WTC11 (cell line): ENCODE measurements at regions of chr13 and their contacts with region 1.

Region 1: GRCh38 chr13:39037880-39038568 is at the starts of genes NHLRC3 and PROSER1:
- DNase-seq: peak; percentile 88
- ATAC-seq: peak; percentile 86
- H3K4me3 Mint-ChIP-seq: peak within 1 kb of the TSS; percentile 92
- H3K27ac Mint-ChIP-seq: peak within 1 kb of the TSS; percentile 81
- H3K4me1 Mint-ChIP-seq: peaks cover 34% of the 10 kb centered on the region
- H3K27me3 Mint-ChIP-seq: no peaks in the 10 kb centered on the region
- CTCF ChIP-seq: no peak
- total RNA-seq, gene NHLRC3: 17.2 to 19.9 TPM (median 18.8 TPM) in 3 replicates
- total RNA-seq, gene PROSER1: 73.6 to 94.6 TPM (median 74.3 TPM) in 3 replicates

Region 2: GRCh38 chr13:39012608-39013007 is 25.4 kb before region 1 on chr13:
- CTCF ChIA-PET with region 1: interaction called, 10 read pairs
- POLR2A ChIA-PET with region 1: no interaction called
- DNase-seq: peak; percentile 71
- ATAC-seq: peak; percentile 99
- H3K4me3 Mint-ChIP-seq: no peak overlapping the region
- H3K27ac Mint-ChIP-seq: peak overlapping the region; percentile 9; the same call in 1 of the 2 replicates
- H3K4me1 Mint-ChIP-seq: peaks cover 5% of the 10 kb centered on the region
- H3K27me3 Mint-ChIP-seq: no peaks in the 10 kb centered on the region
- CTCF ChIP-seq: no peak; the same call in 1 of the 2 replicates

Region 3: GRCh38 chr13:39023790-39024189 is 14.2 kb before region 1 on chr13:
- CTCF ChIA-PET with region 1: interaction called, 3 read pairs
- POLR2A ChIA-PET with region 1: interaction called, 10 read pairs
- DNase-seq: no peak
- ATAC-seq: peak; percentile 38
- H3K4me3 Mint-ChIP-seq: peak overlapping the region; percentile 32
- H3K27ac Mint-ChIP-seq: peak overlapping the region; percentile 99
- H3K4me1 Mint-ChIP-seq: peaks cover 63% of the 10 kb centered on the region
- H3K27me3 Mint-ChIP-seq: no peaks in the 10 kb centered on the region
- CTCF ChIP-seq: no peak

Region 4: GRCh38 chr13:39073992-39074391 is 36.0 kb after region 1 on chr13:
- CTCF ChIA-PET with region 1: no interaction called
- POLR2A ChIA-PET with region 1: no interaction called
- DNase-seq: no peak
- ATAC-seq: peak; percentile 93
- H3K4me3 Mint-ChIP-seq: no peak overlapping the region
- H3K27ac Mint-ChIP-seq: no peak overlapping the region
- H3K4me1 Mint-ChIP-seq: peaks cover 4% of the 10 kb centered on the region
- H3K27me3 Mint-ChIP-seq: no peaks in the 10 kb centered on the region
- CTCF ChIP-seq: no peak